HepG2 (cell line): ENCODE measurements at regions of chr2 and their contacts with region 1.

Region 1: GRCh38 chr2:208265801-208266552 is at the start of gene PIKFYVE:
- DNase-seq: peak; percentile 99
- ATAC-seq: peak; percentile 94
- H3K4me3 ChIP-seq: peak within 1 kb of the TSS; percentile 71 to 87 (median 86)
- H3K27ac ChIP-seq: peak within 1 kb of the TSS; percentile 79
- H3K4me1 ChIP-seq: peaks cover 45% of the 10 kb centered on the region
- H3K27me3 ChIP-seq: no peaks in the 10 kb centered on the region; a peak in 1 of 5 replicates
- CTCF ChIP-seq: 0 out of 2 replicates have a peak, but pooled peaks have one; percentile 40
- EP300 ChIP-seq: peak; percentile 34 to 81; a peak in 2 of 4 replicates
- POLR2A ChIP-seq: peak; percentile 62 to 76; a peak in 3 of 4 replicates
- RAD21 ChIP-seq: 0 out of 2 replicates have a peak, but pooled peaks have one; percentile 12
- total RNA-seq, gene PIKFYVE: 21.7 and 24.4 TPM in 2 replicates

Region 2: DNA sequence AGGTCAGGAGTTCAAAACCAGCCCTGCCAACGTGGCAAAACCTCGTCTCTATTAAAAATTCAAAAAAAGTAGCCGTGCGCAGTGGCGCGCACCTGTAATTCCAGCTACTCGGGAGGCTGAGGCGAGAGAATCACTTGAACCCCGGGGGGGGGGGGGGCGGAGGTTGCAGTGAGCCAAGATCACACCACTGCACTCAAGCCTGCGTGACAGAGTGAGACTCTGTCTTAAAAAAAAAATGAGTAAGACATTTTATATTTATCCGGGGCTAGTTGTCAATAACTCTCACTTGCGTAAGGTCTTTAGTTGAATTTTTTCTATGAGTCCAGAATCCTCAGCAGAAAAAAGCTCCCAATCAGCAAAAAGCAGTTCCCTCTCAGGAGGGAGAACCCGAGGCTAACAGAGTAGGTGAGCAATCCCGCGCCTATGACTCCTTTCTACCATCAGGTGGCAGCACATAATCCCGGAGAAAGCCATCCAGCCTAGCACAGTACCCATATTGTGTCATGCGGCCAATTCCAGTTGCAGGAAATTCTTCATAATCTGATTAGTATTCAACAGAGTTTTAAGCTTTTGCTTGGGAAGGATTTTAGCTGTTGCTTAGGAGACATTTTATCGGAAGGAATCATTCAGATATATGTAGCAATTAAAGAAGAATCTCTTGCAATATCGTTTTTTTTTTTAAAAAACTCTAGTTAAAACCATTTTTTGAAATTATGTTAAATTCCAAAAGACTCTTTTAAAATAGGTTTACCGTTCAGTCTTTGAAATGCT is 90.7 kb before region 1 on chr2:
- CTCF ChIA-PET with region 1: interaction called, 10 read pairs
- POLR2A ChIA-PET with region 1: no interaction called
- in situ Hi-C with region 1: no loop called
- intact Hi-C with region 1: loop called (anchors 1 kb)
- DNase-seq: peak; percentile 86
- ATAC-seq: peak; percentile 97
- H3K4me3 ChIP-seq: peak overlapping the region in 1 of 3 experiments; percentile 16; a peak in 1 of 6 replicates
- H3K27ac ChIP-seq: no peak overlapping the region
- H3K4me1 ChIP-seq: peaks cover 51% of the 10 kb centered on the region
- H3K27me3 ChIP-seq: peaks cover 0 to 9% of the 10 kb centered on the region in 2 experiments; a peak in 2 of 5 replicates
- CTCF ChIP-seq: peak; percentile 92
- EP300 ChIP-seq: no peak; a peak in 1 of 4 replicates
- POLR2A ChIP-seq: no peak
- RAD21 ChIP-seq: peak; percentile 83

Region 3: DNA sequence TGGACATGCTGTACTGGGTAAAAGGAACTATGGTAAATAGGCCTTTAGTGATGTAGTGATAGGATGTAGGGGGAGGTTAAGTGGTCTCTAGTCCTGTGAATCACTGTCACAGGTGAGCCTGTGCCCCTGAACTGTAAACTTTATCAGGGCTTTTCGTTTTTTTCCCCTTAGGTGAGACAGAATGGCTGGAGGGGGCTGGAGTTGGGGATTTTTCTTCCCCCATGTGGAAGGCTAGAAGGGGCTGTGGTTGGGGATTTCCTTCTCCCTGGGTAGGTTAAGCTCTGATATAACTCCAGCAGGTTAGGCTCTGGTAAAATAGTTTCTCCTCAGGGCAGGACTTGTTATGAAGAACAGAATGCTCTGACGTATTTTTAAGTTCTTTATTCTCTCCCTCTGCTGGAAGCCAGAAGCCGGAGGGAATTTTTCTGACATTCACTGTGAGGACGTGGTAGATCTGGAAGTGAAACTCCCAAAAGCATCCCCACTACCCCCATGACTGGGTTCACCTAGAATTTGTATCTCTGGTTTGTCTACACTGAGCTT is 28.6 kb after region 1 on chr2:
- CTCF ChIA-PET with region 1: no interaction called
- POLR2A ChIA-PET with region 1: no interaction called
- in situ Hi-C with region 1: no loop called
- intact Hi-C with region 1: no loop called
- DNase-seq: no peak
- ATAC-seq: no peak
- H3K4me3 ChIP-seq: no peak overlapping the region
- H3K27ac ChIP-seq: no peak overlapping the region
- H3K4me1 ChIP-seq: peaks cover 25% of the 10 kb centered on the region
- H3K27me3 ChIP-seq: no peaks in the 10 kb centered on the region
- CTCF ChIP-seq: no peak
- EP300 ChIP-seq: no peak
- POLR2A ChIP-seq: no peak
- RAD21 ChIP-seq: no peak

Region 4: GRCh38 chr2:208346756-208347155 is 80.8 kb after region 1 on chr2:
- CTCF ChIA-PET with region 1: no interaction called
- POLR2A ChIA-PET with region 1: no interaction called
- in situ Hi-C with region 1: no loop called
- intact Hi-C with region 1: no loop called
- DNase-seq: no peak
- ATAC-seq: no peak
- H3K4me3 ChIP-seq: no peak overlapping the region
- H3K27ac ChIP-seq: no peak overlapping the region
- H3K4me1 ChIP-seq: no peaks in the 10 kb centered on the region
- H3K27me3 ChIP-seq: no peaks in the 10 kb centered on the region
- CTCF ChIP-seq: no peak
- EP300 ChIP-seq: no peak
- POLR2A ChIP-seq: no peak
- RAD21 ChIP-seq: no peak